ENCODE measurements at regions of chr11 and their contacts with region 1.

Region 1: GRCh38 chr11:64742889-64743590 is 902 bp downstream of the RASGRP2 start:
- DNase-seq: peak; percentile 89
- ATAC-seq: peak; percentile 12
- H3K4me3 Mint-ChIP-seq: peak overlapping the region; percentile 96
- H3K27ac Mint-ChIP-seq: no peak overlapping the region
- H3K4me1 Mint-ChIP-seq: peaks cover 43% of the 10 kb centered on the region
- H3K27me3 Mint-ChIP-seq: no peaks in the 10 kb centered on the region
- CTCF ChIP-seq: peak; percentile 85

Region 2: DNA sequence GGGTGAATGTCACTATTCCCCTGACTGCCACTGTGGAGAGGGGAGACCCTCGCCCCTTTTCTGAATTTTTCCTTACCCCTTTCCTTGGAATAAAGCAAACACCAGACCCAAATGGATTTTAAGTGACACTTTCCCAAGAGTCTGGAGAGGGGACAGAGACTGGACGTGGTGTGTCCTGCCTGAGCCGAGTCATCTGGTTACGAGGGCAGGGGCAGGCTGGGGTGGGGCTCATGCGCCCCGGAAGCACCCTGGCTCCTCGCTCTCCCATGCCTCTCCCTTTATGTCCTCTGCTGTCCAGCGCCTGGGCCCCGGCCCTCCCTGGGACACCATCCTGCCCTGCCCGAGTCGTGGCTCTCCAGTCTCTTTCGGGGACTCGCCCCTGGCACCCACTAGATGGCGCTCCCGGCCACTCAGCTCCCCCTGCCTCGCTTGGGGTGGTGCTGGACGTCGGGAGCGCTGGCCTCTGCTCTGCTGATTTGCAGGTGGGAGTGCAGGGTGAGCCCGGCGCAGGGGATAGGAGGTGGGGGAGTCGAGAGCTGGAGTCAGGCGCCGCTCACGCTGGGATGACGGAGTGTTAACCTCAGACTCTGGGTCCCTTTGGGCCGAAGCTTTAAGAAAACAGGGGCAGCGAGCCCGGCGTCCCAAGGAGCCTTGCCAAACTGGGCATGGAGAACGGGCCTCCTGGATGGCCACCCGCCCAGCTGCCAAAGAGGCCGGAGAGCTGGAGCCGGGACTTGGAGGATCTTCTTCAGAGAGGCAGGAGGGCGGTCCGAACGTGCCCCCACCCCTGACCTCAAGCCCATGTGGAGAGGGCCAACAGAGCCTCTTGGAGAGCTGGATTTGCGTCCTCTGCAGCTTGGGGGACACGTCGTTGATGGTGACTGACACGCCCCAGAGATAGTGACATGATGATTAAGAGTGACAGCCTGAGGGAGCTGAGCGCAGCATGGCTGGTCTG is 294.2 kb before region 1 on chr11:
- CTCF ChIA-PET with region 1: interaction called, 3 read pairs
- POLR2A ChIA-PET with region 1: no interaction called
- intact Hi-C with region 1: loop called (anchors 2 kb)
- DNase-seq: peak; percentile 71
- ATAC-seq: peak; percentile 59
- H3K4me3 Mint-ChIP-seq: peak overlapping the region; percentile 87
- H3K27ac Mint-ChIP-seq: peak overlapping the region; percentile 73
- H3K4me1 Mint-ChIP-seq: peaks cover 35% of the 10 kb centered on the region
- H3K27me3 Mint-ChIP-seq: peaks cover 2% of the 10 kb centered on the region
- CTCF ChIP-seq: no peak

Region 3: GRCh38 chr11:64652586-64653387 is 90.3 kb before region 1 on chr11:
- CTCF ChIA-PET with region 1: interaction called, 3 read pairs
- POLR2A ChIA-PET with region 1: interaction called, 3 read pairs
- intact Hi-C with region 1: loop called (anchors 1 kb)
- DNase-seq: peak; percentile 59
- ATAC-seq: peak; percentile 60
- H3K4me3 Mint-ChIP-seq: no peak overlapping the region
- H3K27ac Mint-ChIP-seq: no peak overlapping the region
- H3K4me1 Mint-ChIP-seq: peaks cover 27% of the 10 kb centered on the region
- H3K27me3 Mint-ChIP-seq: peaks cover 5% of the 10 kb centered on the region
- CTCF ChIP-seq: no peak

Region 4: GRCh38 chr11:64723117-64723906 is 19.7 kb before region 1 on chr11 and contains the start of gene NRXN2:
- CTCF ChIA-PET with region 1: no interaction called
- POLR2A ChIA-PET with region 1: interaction called, 5 read pairs
- intact Hi-C with region 1: loop called (anchors 1 kb)
- DNase-seq: peak; percentile 88
- ATAC-seq: peak; percentile 89
- H3K4me3 Mint-ChIP-seq: peak within 1 kb of the TSS; percentile 81
- H3K27ac Mint-ChIP-seq: peak within 1 kb of the TSS; percentile 76
- H3K4me1 Mint-ChIP-seq: peaks cover 22% of the 10 kb centered on the region
- H3K27me3 Mint-ChIP-seq: peaks cover 30% of the 10 kb centered on the region
- CTCF ChIP-seq: peak; percentile 64
- total RNA-seq, gene NRXN2: 0.54 and 0.73 TPM in 2 replicates

Region 5: DNA sequence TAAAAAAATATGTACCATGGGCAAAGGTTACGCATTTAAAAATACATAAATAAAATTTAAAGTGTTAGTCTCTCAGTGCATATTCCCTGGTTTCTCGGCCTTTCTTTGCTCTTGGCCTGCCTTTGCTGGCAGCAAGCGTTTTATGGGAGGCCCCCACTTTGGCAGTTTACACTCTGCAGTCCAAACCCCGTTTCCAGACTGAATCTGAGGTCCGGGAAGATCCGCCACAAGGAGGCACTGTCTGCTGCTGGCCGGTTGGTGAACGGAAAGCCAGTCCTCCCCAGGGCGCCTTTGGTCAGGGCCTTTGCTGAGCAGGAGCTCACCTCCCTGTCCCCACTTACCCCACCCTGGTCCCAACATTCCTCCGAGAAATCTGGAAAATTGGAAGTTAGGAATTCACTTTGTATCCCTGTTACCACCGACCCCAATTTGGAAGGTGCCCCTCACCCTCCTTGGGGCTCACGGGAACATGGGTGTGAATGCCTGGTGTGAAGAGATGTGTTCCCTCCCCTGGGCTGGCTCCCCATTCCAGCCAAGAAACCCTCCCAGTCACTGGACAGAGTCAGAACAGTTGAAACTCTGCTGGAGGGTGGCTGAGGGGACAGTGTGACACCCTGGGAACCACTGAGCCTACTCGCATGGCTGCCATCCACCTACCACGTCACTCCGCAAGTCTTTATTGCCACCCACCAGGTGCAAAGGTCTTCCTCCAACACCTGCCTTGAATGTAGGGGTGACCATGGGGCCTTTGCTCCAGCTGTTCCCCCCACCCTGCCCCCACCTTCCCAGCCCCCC is 44.7 kb after region 1 on chr11:
- CTCF ChIA-PET with region 1: interaction called, 4 read pairs
- POLR2A ChIA-PET with region 1: interaction called, 21 read pairs
- intact Hi-C with region 1: no loop called
- DNase-seq: peak; percentile 57
- ATAC-seq: peak; percentile 74
- H3K4me3 Mint-ChIP-seq: no peak overlapping the region
- H3K27ac Mint-ChIP-seq: peak overlapping the region; percentile 73
- H3K4me1 Mint-ChIP-seq: peaks cover 18% of the 10 kb centered on the region
- H3K27me3 Mint-ChIP-seq: no peaks in the 10 kb centered on the region
- CTCF ChIP-seq: no peak

Region 6: GRCh38 chr11:64810271-64810890 is 67.3 kb after region 1 on chr11 and contains the start of gene MEN1:
- CTCF ChIA-PET with region 1: no interaction called
- POLR2A ChIA-PET with region 1: interaction called, 14 read pairs
- intact Hi-C with region 1: loop called (anchors 2 kb)
- DNase-seq: peak; percentile 78
- ATAC-seq: peak; percentile 87
- H3K4me3 Mint-ChIP-seq: peak within 1 kb of the TSS; percentile 96
- H3K27ac Mint-ChIP-seq: peak within 1 kb of the TSS; percentile 85
- H3K4me1 Mint-ChIP-seq: peaks cover 36% of the 10 kb centered on the region
- H3K27me3 Mint-ChIP-seq: no peaks in the 10 kb centered on the region
- CTCF ChIP-seq: no peak
- total RNA-seq, gene MEN1: 35.1 and 44.6 TPM in 2 replicates

Region 7: DNA sequence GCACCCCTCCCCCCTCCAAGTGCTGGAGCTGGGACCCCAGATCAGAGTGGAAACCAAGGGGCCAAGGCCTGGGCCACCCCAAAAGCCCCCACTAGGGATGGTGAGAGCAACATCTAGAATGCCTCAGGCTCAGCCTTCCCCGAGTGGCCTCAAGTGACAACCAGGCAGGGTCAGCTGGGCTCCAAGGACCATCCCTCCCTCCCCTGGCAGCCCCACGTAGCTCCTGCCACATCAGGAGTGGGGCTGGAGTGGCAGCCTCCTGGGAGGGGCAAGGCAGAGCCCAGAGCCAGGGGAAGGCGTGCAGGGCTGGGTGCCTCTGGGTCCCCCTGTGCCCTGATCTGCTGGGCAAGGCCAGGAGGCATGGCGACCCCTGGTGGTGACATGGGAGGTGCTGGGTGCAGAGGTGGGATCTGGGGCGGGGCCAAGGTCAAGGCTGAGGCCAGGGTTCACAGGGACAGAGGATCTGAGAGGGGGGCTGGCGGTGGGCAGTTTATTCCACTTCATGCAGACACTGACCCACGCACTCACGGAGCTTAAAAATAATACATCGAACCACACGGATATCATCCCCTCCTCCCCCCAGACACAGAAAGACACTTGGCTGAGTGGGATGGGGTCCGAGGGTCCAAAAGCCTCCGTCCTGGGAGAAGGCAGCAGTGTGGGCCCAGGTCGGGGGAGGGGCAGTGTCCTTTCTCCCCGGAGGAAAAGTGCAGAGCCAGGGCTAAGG is 151.2 kb after region 1 on chr11:
- CTCF ChIA-PET with region 1: interaction called, 3 read pairs
- POLR2A ChIA-PET with region 1: no interaction called
- intact Hi-C with region 1: loop called (anchors 1 kb)
- DNase-seq: peak; percentile 93
- ATAC-seq: peak; percentile 99
- H3K4me3 Mint-ChIP-seq: no peak overlapping the region
- H3K27ac Mint-ChIP-seq: no peak overlapping the region
- H3K4me1 Mint-ChIP-seq: peaks cover 26% of the 10 kb centered on the region
- H3K27me3 Mint-ChIP-seq: no peaks in the 10 kb centered on the region
- CTCF ChIP-seq: peak; percentile 67

Region 8: GRCh38 chr11:65290448-65291165 is 547.6 kb after region 1 on chr11:
- CTCF ChIA-PET with region 1: no interaction called
- POLR2A ChIA-PET with region 1: no interaction called
- intact Hi-C with region 1: no loop called
- DNase-seq: no peak
- ATAC-seq: no peak
- H3K4me3 Mint-ChIP-seq: no peak overlapping the region
- H3K27ac Mint-ChIP-seq: no peak overlapping the region
- H3K4me1 Mint-ChIP-seq: no peaks in the 10 kb centered on the region
- H3K27me3 Mint-ChIP-seq: no peaks in the 10 kb centered on the region
- CTCF ChIP-seq: no peak

Measured in activated B cell treated with CpG ODN at 0.5 μM for 24 hours (primary cell).